ENCODE measurements at regions of chr5 and their contacts with region 1.

Region 1: GRCh38 chr5:81105261-81105877 is 127.8 kb upstream of the CKMT2 start:
- DNase-seq: no peak
- H3K4me3 Mint-ChIP-seq: no peak overlapping the region
- H3K27ac Mint-ChIP-seq: no peak overlapping the region
- H3K4me1 Mint-ChIP-seq: peaks cover 23% of the 10 kb centered on the region
- H3K27me3 Mint-ChIP-seq: no peaks in the 10 kb centered on the region

Region 2: GRCh38 chr5:80686757-80687156 is 418.6 kb before region 1 on chr5:
- CTCF ChIA-PET with region 1: interaction called, 77 read pairs
- POLR2A ChIA-PET with region 1: no interaction called
- intact Hi-C with region 1: loop called (anchors 2 kb)
- DNase-seq: no peak
- H3K4me3 Mint-ChIP-seq: no peak overlapping the region
- H3K27ac Mint-ChIP-seq: no peak overlapping the region
- H3K4me1 Mint-ChIP-seq: peaks cover 17% of the 10 kb centered on the region
- H3K27me3 Mint-ChIP-seq: no peaks in the 10 kb centered on the region

Region 3: GRCh38 chr5:80799041-80799440 is 306.3 kb before region 1 on chr5:
- CTCF ChIA-PET with region 1: interaction called, 5 read pairs
- POLR2A ChIA-PET with region 1: no interaction called
- intact Hi-C with region 1: loop called (anchors 10 kb)
- DNase-seq: no peak
- H3K4me3 Mint-ChIP-seq: no peak overlapping the region
- H3K27ac Mint-ChIP-seq: no peak overlapping the region
- H3K4me1 Mint-ChIP-seq: no peaks in the 10 kb centered on the region
- H3K27me3 Mint-ChIP-seq: no peaks in the 10 kb centered on the region

Region 4: GRCh38 chr5:80960531-80961375 is 144.6 kb before region 1 on chr5:
- CTCF ChIA-PET with region 1: interaction called, 22 read pairs
- POLR2A ChIA-PET with region 1: no interaction called
- intact Hi-C with region 1: loop called (anchors 1 kb)
- DNase-seq: peak; percentile 60
- H3K4me3 Mint-ChIP-seq: peak overlapping the region; percentile 81
- H3K27ac Mint-ChIP-seq: peak overlapping the region; percentile 56
- H3K4me1 Mint-ChIP-seq: peaks cover 55% of the 10 kb centered on the region
- H3K27me3 Mint-ChIP-seq: peaks cover 6% of the 10 kb centered on the region

Region 5: DNA sequence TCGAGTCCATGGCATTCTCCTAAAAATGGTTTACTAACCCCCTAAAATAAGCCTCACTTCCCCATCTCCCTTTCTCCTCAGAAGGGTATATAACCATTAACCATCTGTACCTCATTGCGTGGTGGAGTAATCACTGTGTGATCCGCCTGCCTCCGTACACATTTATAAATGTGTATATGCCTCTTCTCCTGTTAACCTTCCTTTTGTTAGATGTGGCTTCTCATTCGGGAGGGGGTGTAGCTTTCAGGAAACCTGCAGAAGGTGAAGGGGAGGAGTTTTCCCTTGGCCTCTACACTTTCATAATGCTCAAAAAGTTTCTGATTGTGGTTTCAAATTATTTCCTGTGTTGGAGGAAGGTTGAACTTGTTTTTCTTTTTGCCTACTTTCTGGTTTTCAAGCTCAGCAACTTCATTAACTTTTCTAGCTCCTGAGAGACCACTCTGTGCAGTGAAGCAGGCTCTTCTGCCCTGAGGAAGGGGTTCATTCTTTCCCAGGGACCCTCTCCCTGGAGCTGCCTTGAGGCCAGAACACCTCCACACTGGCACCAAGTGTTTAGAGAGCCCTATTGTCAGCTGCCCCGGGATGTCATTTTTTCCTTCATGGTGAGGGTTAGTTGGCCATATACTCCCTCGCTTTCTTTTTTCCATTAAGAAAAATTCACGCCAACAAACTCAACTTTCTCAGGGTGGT is 98.3 kb before region 1 on chr5:
- CTCF ChIA-PET with region 1: interaction called, 5 read pairs
- POLR2A ChIA-PET with region 1: no interaction called
- intact Hi-C with region 1: loop called (anchors 5 kb)
- DNase-seq: peak; percentile 66
- H3K4me3 Mint-ChIP-seq: peak overlapping the region; percentile 76
- H3K27ac Mint-ChIP-seq: peak overlapping the region; percentile 96
- H3K4me1 Mint-ChIP-seq: peaks cover 69% of the 10 kb centered on the region
- H3K27me3 Mint-ChIP-seq: no peaks in the 10 kb centered on the region

Region 6: DNA sequence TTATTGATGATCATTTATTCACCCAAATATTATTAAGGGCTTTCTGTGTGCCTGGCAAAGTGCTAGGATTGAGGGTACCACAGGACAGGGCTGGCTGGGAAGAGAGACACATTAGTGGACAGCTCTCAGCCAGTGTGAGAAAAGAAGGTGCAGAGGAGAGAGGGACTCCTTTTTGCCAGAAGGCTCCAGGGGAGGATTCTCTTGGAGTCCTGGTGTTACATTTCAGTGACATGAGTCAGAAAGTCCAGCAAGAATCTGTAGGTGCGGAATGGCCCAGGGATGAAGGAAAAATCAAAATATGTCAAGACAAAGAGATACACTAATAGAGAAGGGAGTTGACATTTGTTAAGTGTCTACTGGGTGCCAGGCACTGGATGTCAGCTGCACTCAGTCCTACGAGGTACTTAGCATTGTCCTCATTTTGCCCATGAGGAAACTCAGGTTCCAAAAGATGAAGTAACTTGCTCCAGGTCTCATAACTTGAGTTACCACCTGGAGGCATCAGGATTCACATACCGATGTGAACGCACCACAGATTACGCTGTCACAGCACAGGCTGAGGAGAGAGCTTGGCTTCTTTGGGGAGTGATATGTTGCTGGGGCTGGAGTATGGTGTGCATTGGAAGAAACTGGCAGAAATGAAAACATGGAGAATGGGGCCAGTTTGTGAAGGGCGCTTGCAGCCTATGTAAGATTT is 84.7 kb before region 1 on chr5:
- CTCF ChIA-PET with region 1: no interaction called
- POLR2A ChIA-PET with region 1: no interaction called
- intact Hi-C with region 1: no loop called
- DNase-seq: no peak
- H3K4me3 Mint-ChIP-seq: no peak overlapping the region
- H3K27ac Mint-ChIP-seq: no peak overlapping the region
- H3K4me1 Mint-ChIP-seq: peaks cover 80% of the 10 kb centered on the region
- H3K27me3 Mint-ChIP-seq: no peaks in the 10 kb centered on the region

Region 7: DNA sequence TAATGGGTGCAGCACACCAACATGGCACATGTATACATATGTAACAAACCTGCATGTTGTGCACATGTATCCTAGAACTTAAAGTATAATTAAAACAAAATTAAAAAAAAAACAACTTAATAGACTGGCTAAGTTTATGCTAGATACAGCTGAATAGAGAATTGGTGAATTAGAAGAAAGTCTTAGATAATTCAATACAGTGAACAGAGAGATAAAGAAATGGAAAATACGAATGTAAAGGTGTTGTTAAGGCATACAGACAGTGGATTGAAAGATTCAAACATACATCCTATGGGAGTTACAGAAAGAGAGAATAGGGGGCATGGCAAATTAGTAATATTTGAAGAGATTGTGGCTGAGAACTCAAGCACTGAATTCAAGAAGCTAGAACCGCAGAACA is 69.8 kb before region 1 on chr5:
- CTCF ChIA-PET with region 1: no interaction called
- POLR2A ChIA-PET with region 1: no interaction called
- intact Hi-C with region 1: no loop called
- DNase-seq: no peak
- H3K4me3 Mint-ChIP-seq: no peak overlapping the region
- H3K27ac Mint-ChIP-seq: no peak overlapping the region
- H3K4me1 Mint-ChIP-seq: peaks cover 4% of the 10 kb centered on the region
- H3K27me3 Mint-ChIP-seq: no peaks in the 10 kb centered on the region